GM12878 (cell line): ENCODE measurements at regions of chr6 and their contacts with region 1.

Region 1: DNA sequence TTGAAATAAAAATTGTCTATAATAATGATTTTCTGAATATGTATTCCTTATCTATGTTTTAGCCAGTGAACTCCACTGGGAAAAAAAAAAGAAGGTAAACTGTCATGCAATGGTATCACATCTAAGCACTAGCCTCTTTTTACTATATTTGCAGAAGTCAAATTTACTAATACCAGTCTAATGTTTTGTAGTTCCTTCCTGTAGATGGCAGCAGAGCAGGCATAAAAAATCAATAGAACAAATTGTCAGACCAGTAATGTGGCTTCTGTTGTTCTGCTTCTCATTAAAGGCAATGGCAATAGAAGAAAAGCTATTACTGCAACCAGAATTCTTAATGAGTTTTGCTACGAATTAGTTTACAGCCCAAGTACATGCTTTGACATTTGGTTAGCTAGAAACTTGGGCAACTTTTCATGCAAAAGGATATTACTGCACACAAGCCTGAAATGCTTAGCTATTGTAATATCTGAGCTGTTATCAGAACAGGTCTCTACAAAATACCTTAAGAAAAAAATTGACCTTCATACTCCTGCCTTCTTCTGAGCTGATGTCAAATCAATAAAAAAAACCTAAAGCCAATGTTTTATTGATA is 476.9 kb downstream of the KHDRBS2 start:
- DNase-seq: no peak
- ATAC-seq: peak; percentile 73
- H3K4me3 ChIP-seq: no peak overlapping the region
- H3K27ac ChIP-seq: no peak overlapping the region
- H3K4me1 ChIP-seq: no peaks in the 10 kb centered on the region
- H3K27me3 ChIP-seq: no peaks in the 10 kb centered on the region
- CTCF ChIP-seq: peak; percentile 43 to 49 (median 49); a peak in 5 of 6 replicates
- EP300 ChIP-seq: no peak
- POLR2A ChIP-seq: no peak
- RAD21 ChIP-seq: peak; percentile 60

Region 2: GRCh38 chr6:61210549-61210948 is 598.6 kb before region 1 on chr6:
- CTCF ChIA-PET with region 1: no interaction called
- POLR2A ChIA-PET with region 1: no interaction called
- RAD21 ChIA-PET with region 1: no interaction called
- SMC1A ChIA-PET with region 1: no interaction called
- in situ Hi-C with region 1: no loop called
- intact Hi-C with region 1: no loop called
- DNase-seq: no peak
- ATAC-seq: no peak
- H3K4me3 ChIP-seq: no peak overlapping the region
- H3K27ac ChIP-seq: no peak overlapping the region
- H3K4me1 ChIP-seq: no peaks in the 10 kb centered on the region
- H3K27me3 ChIP-seq: no peaks in the 10 kb centered on the region
- CTCF ChIP-seq: no peak
- EP300 ChIP-seq: no peak
- POLR2A ChIP-seq: no peak
- RAD21 ChIP-seq: no peak

Region 3: DNA sequence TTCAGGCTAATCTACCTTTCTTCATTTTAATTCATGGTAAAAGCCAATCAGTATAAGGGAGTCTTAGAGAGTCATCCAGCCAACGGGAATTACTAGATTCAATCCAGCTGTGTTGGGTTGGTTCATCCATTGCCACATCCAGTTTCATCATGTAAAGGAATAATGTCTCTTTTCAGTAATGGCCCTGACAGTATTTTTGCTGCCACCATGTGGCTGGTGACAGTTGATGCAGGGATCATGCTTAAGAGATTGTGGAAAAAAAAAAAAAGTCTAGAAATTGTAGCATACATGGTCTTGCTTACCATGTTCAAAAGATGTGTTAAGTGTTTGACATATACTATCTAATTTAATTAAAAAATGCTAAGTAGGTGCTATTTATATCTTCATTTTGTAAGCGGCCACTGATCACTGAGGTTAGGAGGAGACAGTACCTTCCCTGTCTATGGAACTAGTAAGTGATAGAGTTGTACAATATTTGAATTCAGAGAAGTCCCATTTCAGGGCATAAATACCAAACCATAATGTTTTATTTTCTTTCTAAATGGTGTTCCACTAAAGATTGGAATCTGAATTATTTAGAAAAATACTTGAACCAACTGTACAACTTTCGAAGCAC is 341.1 kb after region 1 on chr6:
- CTCF ChIA-PET with region 1: interaction called, 11 read pairs
- POLR2A ChIA-PET with region 1: no interaction called
- RAD21 ChIA-PET with region 1: interaction called, 7 read pairs
- SMC1A ChIA-PET with region 1: interaction called, 6 read pairs
- in situ Hi-C with region 1: no loop called
- intact Hi-C with region 1: loop called (anchors 1 kb)
- DNase-seq: no peak
- ATAC-seq: peak; percentile 69
- H3K4me3 ChIP-seq: no peak overlapping the region
- H3K27ac ChIP-seq: no peak overlapping the region
- H3K4me1 ChIP-seq: no peaks in the 10 kb centered on the region
- H3K27me3 ChIP-seq: no peaks in the 10 kb centered on the region
- CTCF ChIP-seq: peak; percentile 61 to 65 (median 64)
- EP300 ChIP-seq: no peak
- POLR2A ChIP-seq: no peak
- RAD21 ChIP-seq: peak; percentile 48

Region 4: DNA sequence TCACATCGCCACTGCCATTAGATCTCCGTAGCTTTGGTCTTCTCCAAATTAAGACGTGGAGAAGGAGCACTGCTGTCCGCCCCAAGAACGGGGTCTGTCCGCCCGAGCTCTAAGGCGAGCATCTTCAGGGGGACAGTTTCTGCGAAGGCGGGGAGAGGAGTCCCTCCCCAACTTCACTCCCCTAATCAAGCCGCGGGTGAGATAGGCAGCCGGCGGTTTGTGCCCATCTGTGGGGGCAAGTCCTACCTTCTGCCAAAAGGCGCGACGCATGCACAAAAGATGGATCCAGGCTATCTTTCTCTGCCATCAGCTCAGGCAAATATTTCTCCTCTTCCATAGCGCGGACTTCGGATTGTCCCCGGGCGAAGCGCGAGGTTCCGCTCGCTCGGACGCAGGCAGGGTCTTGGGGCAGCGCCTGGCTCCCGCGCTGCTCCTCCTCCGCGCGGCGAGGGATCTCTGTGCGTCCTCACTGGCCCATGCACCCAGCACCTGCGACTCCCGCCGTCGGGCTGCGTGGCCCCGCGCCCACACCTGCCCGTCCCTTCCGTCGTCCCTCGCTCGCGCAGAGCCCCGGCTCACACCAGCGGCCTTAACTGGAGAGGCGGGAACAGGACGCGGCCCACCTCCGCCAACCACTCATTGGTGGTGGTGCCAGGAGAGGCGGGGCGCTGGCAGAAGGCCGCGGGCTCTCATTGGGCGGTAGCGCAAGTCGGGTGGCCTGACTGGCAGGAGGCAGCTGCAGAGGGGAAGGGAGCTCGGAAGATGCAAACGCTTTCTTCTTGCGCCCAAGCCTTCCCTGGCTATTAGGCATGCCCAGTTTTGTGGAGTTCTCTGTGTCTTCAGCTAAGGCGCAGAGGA is 476.7 kb after region 1 on chr6 and contains the start of gene KHDRBS2:
- CTCF ChIA-PET with region 1: interaction called, 12 read pairs
- POLR2A ChIA-PET with region 1: no interaction called
- RAD21 ChIA-PET with region 1: interaction called, 11 read pairs
- SMC1A ChIA-PET with region 1: interaction called, 5 read pairs
- in situ Hi-C with region 1: no loop called
- intact Hi-C with region 1: no loop called
- DNase-seq: peak; percentile 31
- ATAC-seq: peak; percentile 100
- H3K4me3 ChIP-seq: peak within 1 kb of the TSS; percentile 67
- H3K27ac ChIP-seq: no peak within 1 kb of the TSS
- H3K4me1 ChIP-seq: no peaks in the 10 kb centered on the region
- H3K27me3 ChIP-seq: peaks cover 0 to 3% of the 10 kb centered on the region in 2 experiments; a peak in 1 of 4 replicates
- CTCF ChIP-seq: no peak
- EP300 ChIP-seq: no peak
- POLR2A ChIP-seq: no peak
- RAD21 ChIP-seq: no peak
- polyA plus RNA-seq, gene KHDRBS2: not detected

Region 5: GRCh38 chr6:62775427-62776022 is 966.4 kb after region 1 on chr6:
- CTCF ChIA-PET with region 1: interaction called, 3 read pairs
- POLR2A ChIA-PET with region 1: no interaction called
- RAD21 ChIA-PET with region 1: no interaction called
- SMC1A ChIA-PET with region 1: no interaction called
- in situ Hi-C with region 1: loop called (anchors 25 kb)
- intact Hi-C with region 1: no loop called
- DNase-seq: no peak
- ATAC-seq: peak; percentile 67
- H3K4me3 ChIP-seq: no peak overlapping the region
- H3K27ac ChIP-seq: no peak overlapping the region
- H3K4me1 ChIP-seq: no peaks in the 10 kb centered on the region
- H3K27me3 ChIP-seq: no peaks in the 10 kb centered on the region
- CTCF ChIP-seq: peak; percentile 29 to 55 (median 43); a peak in 4 of 6 replicates
- EP300 ChIP-seq: no peak
- POLR2A ChIP-seq: no peak
- RAD21 ChIP-seq: peak; percentile 44; the same call in 1 of the 2 replicates

Region 6: DNA sequence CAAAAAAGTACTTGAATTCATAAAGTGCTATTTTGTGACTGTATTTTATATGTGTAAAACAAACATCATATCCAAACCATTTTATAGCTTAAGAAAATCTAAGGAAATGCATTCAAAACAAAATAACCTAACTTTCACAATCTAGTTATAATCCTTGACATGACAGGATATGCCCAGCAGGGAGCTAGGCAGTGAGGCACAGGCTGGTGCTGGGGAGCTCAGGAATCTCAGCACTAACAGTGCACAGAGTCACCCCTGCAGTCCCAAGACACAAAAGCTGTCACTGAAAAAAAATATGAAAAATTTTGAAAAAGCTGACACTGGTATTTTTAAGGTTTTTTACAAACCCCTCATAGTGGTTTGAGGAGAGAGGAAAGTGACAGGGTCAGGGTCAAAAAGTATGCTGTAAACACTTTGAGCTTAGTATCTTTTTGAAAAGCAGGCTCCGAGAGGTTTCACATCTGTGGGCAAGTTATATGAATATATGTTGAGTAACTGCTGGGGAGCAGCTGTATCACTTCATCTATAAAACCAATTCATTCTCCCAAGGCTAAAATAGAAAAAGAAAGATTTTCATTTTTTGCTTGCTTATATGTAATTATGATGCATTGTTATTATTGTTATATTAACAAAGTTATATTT is 1486.6 kb after region 1 on chr6:
- CTCF ChIA-PET with region 1: no interaction called
- POLR2A ChIA-PET with region 1: no interaction called
- RAD21 ChIA-PET with region 1: no interaction called
- SMC1A ChIA-PET with region 1: no interaction called
- in situ Hi-C with region 1: loop called (anchors 25 kb)
- intact Hi-C with region 1: no loop called
- DNase-seq: no peak
- ATAC-seq: peak; percentile 44
- H3K4me3 ChIP-seq: no peak overlapping the region
- H3K27ac ChIP-seq: no peak overlapping the region
- H3K4me1 ChIP-seq: no peaks in the 10 kb centered on the region
- H3K27me3 ChIP-seq: no peaks in the 10 kb centered on the region
- CTCF ChIP-seq: no peak
- EP300 ChIP-seq: no peak
- POLR2A ChIP-seq: no peak
- RAD21 ChIP-seq: no peak